Left cardiac atrium (tissue), 4 donors: ENCODE measurements at regions of chr9 and their contacts with region 1.

Region 1: DNA sequence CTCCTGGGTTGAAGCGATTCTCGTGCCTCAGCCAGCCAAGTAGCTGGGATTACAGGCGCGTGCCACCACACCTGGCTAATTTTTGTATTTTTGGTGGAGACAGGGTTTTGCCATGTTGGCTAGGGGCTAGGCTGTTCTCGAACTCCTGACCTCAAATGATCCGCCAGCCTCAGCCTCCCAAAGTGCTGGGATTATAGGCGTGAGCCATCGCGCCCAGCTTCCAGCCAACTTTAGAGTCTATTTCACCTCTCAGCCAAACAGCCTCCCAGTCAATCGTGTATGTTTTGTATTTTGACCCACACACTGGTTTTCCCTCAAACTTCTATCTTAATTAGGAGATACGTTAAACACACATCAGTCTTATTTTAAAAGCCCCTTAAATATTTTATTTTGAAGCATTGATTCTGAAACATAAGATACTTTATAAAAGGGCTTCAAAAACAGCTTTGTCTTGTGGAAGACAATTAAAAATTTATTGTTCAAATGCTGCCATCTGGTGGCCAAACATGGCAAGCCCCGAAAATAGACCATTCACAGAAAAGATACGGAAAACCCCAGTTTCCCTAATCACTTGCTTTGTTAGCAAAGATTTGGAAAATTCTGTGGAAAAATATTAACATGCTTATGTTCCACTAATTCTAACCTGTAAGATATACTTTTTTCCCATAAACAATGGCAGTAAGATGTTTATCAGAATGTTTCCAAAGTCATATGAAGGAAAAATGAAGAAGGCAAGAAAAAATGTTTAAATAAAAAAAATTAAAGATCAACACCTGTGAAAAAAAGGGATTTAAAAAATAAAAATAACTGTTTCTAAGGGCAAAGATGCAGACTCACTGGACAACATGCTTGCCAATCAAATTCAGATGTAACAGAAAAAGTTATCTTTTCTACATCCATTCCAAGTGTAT is 33.1 kb downstream of the APTX start:
- DNase-seq: peak; percentile 45
- ATAC-seq: no peak

Region 2: GRCh38 chr9:32378993-32379729 is 589.2 kb before region 1 on chr9:
- intact Hi-C with region 1: loop called in 1 of 2 experiments (anchors 2 kb)
- DNase-seq: no peak
- ATAC-seq: peak; percentile 81 to 92

Region 3: GRCh38 chr9:32579706-32580331 is 388.5 kb before region 1 on chr9:
- intact Hi-C with region 1: loop called in 1 of 2 experiments (anchors 10 kb)
- DNase-seq: peak; percentile 67
- ATAC-seq: no peak

Region 4: DNA sequence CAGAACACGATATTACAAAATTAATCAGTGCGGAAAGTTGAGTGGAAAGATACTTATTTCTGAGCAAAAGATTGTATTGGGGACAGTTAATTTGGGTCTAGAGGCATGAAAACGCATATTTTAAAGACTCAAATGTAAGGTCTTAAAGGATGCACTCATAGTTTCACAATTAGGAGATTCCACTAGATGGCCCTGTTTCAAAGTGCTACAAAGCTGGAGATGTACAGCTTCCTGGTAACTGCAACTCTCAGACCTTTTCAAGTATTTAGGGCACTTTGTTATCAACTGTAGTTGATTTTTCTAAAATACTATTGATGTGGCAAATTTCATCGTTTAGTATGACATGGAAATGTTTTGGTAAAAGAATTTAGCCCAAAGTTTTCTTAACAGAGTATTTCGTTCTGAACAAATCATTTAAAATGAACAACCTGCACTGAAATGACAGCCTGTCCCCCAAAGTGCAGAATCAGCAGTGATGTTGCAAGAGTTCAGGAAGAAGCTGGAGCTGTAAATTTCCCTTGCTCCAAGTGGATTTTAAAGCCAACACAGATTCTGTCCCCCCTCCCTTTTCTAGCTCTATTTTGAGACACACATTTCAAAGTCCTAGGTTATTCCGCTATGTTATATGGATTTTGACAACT is 379.2 kb before region 1 on chr9:
- intact Hi-C with region 1: loop called (anchors 2 to 10 kb)
- DNase-seq: no peak
- ATAC-seq: peak in 1 of 2 donors; percentile 71

Region 5: GRCh38 chr9:33044127-33044673 is 75.8 kb after region 1 on chr9:
- intact Hi-C with region 1: no loop called
- DNase-seq: peak; percentile 92
- ATAC-seq: peak; percentile 93

Region 6: GRCh38 chr9:33187519-33188218 is 219.3 kb after region 1 on chr9:
- intact Hi-C with region 1: no loop called
- DNase-seq: peak; percentile 67
- ATAC-seq: peak; percentile 87 to 91